ENCODE measurements at regions of chr4 and their contacts with region 1.

Region 1: GRCh38 chr4:174318829-174319764 is 35.4 kb downstream of the CEP44 start:
- H3K4me3 Mint-ChIP-seq: no peak overlapping the region
- H3K27ac Mint-ChIP-seq: no peak overlapping the region
- H3K4me1 Mint-ChIP-seq: peaks cover 8% of the 10 kb centered on the region
- H3K27me3 Mint-ChIP-seq: no peaks in the 10 kb centered on the region

Region 2: GRCh38 chr4:174012135-174012885 is 306.8 kb before region 1 on chr4:
- intact Hi-C with region 1: loop called (anchors 10 kb)
- H3K4me3 Mint-ChIP-seq: no peak overlapping the region
- H3K27ac Mint-ChIP-seq: no peak overlapping the region
- H3K4me1 Mint-ChIP-seq: no peaks in the 10 kb centered on the region
- H3K27me3 Mint-ChIP-seq: peaks cover 4% of the 10 kb centered on the region

Region 3: DNA sequence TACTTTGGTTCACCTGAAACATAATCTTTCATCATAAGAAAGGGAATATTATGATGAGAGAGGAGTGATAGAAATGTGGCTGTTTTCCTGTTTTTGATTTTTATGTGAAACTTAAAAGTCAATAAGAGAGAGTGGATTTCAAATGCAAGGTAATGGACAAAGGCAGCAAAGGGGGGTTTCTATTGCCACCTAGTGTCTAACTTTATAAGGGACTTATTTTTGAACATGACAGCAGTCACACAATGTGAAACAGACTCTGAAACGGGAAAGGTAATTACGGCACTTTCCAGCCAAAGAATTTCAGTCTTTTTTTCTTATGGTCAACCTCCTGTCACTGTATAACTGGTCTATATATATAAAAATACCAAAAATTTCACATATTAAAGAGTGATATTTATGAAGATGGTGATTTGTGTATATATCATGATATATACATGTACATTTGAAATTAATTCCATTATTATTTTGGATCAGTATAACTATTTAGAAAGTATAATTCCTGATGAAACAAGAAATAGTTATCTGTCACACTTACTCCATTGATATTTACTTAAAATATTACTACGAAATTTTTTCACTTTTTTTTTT is 162.8 kb before region 1 on chr4:
- intact Hi-C with region 1: loop called (anchors 1 kb)
- H3K4me3 Mint-ChIP-seq: no peak overlapping the region
- H3K27ac Mint-ChIP-seq: no peak overlapping the region
- H3K4me1 Mint-ChIP-seq: no peaks in the 10 kb centered on the region
- H3K27me3 Mint-ChIP-seq: peaks cover 12% of the 10 kb centered on the region

Region 4: GRCh38 chr4:174244441-174244840 is 74.7 kb before region 1 on chr4:
- intact Hi-C with region 1: no loop called
- H3K4me3 Mint-ChIP-seq: no peak overlapping the region
- H3K27ac Mint-ChIP-seq: no peak overlapping the region
- H3K4me1 Mint-ChIP-seq: no peaks in the 10 kb centered on the region
- H3K27me3 Mint-ChIP-seq: no peaks in the 10 kb centered on the region

Region 5: GRCh38 chr4:174826660-174827059 is 507.6 kb after region 1 on chr4:
- intact Hi-C with region 1: no loop called
- H3K4me3 Mint-ChIP-seq: no peak overlapping the region
- H3K27ac Mint-ChIP-seq: no peak overlapping the region
- H3K4me1 Mint-ChIP-seq: no peaks in the 10 kb centered on the region
- H3K27me3 Mint-ChIP-seq: peaks cover 14% of the 10 kb centered on the region

Measured in dendritic cell treated with granulocyte-macrophage colony-stimulating factor and Interleukin-4, amounts not matched to agents 40 ng/mL and 50 ng/mL, for 4 days (primary cell).